Motor neuron (in vitro differentiated cells): ENCODE measurements at regions of chr11 and their contacts with region 1.

Region 1: DNA sequence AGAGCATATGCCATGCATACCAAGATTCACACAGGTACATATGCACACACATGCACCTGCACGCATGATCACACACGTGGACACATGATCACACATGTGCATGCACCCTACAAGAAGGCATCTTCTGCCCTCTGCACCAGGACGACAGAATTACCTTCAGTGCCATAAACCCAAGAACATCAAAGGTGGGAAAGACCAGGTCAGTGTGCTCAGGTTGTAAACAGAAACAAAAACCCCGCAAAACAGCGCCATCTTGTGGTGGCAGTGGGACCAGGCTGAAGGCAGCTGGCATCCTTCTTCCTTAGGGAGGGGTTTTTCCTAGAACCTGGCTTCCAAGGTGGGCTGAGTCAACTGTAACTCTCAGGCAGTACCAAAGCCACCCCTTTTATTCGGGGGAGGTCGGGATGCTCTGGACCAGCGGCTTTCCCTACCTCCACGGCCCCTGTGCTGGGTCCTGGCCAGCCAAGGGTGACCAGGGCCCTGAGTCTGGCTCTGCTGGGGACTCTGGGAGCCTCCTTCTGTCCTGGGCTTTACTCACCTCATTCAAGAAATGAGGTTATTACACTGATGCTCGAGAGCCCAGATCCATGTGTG is 69.4 kb upstream of the FGF3 start:
- ATAC-seq: peak; percentile 55 to 88 (median 64)
- H3K4me3 ChIP-seq: no peak overlapping the region
- H3K27ac ChIP-seq: no peak overlapping the region
- H3K4me1 ChIP-seq: peaks cover 34 to 37% of the 10 kb centered on the region in 2 donors

Region 2: DNA sequence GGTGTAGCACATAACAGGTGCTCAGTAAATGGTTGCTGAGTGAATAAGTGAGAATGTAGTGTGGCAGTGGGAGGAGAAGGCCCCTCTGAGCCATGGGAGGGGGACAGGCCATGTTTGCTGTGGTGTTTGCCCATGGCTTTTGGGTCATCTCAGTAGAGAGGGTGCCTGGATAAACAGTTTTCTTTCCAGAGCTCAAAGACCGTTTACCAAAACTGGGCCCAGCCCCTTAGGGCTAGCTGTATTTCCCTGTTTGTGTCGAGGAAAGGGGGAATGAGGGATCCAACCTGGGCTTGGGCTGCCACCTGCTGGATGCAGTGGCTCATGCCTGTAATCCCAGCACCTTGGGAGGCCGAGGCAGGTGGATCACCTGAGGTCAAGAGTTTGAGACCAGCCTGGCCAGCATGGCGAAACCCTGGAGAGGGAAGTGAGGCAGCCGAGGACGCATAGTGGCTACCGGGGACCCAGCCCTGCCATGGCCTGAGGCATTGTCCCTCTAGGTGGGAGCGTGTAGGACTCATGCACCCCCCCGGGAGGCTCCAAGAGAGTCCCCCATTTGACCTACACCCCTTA is 204.7 kb before region 1 on chr11:
- in situ Hi-C with region 1: loop called in 1 of 9 experiments (anchors 25 kb)
- ATAC-seq: peak in 2 of 8 experiments; percentile 24 to 46
- H3K4me3 ChIP-seq: no peak overlapping the region
- H3K27ac ChIP-seq: no peak overlapping the region
- H3K4me1 ChIP-seq: no peaks in the 10 kb centered on the region

Region 3: DNA sequence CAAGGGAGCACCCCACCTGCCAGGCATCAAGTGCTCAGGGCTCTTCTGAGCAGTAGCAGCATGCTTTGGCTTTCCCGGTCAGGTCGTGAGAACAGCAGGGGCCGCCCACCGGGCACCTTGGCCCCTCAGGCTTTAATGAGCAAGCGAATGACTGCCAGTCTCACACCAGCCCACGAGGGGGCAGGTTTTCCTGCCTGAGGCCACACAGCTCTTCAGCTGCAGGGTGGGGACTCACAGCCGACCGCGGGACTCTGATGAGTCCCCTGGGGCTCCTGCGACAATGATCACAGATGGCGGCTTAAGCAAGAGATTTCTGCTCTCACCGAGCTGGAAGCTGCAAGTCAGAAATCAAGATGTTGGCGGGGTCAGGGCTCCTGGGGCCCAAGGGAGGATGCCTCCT is 170.4 kb before region 1 on chr11:
- in situ Hi-C with region 1: loop called in 6 of 9 experiments (anchors 25 kb)
- ATAC-seq: peak; percentile 82 to 98 (median 95)
- H3K4me3 ChIP-seq: no peak overlapping the region
- H3K27ac ChIP-seq: no peak overlapping the region
- H3K4me1 ChIP-seq: peaks cover 12 to 17% of the 10 kb centered on the region in 2 donors